ENCODE measurements at regions of chr9 and their contacts with region 1.

Region 1: DNA sequence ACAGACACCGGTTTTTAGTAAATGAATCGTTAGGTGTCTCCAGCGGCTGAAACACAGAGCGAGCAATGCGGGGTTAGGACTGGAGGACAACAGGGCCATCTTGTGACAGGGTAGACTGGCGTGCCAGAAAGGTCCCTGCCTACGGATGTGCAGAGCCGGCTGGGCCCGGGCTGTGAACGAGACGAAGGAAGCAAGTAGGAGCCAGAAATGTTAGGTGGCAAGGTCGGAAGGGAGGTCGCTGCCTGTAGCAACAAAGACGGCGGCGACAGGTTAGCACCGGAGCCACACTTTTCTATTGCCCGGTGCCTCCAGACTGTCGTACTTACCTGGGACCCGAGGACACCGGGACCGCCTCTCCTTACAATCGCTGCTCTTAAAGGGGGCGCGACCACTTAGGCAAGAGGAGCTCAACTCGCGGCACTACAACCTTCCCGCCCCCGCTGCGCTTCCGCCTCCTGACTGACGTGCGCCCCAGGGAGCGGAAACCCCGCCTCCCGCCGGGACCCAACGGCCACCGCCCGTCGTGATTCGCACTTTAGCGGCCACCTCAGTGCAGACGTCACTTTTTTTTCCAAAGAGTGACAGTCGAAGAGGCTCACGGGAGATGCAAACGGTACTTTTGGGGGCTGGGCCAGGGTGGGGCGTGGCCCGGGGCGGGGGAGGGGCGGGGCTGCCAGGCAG is at the start of gene INIP:
- DNase-seq: peak; percentile 98
- ATAC-seq: peak; percentile 93
- H3K4me3 ChIP-seq: peak within 1 kb of the TSS; percentile 81 to 92 (median 87)
- H3K4me3 Mint-ChIP-seq: peak within 1 kb of the TSS; percentile 97
- H3K27ac ChIP-seq: peak within 1 kb of the TSS; percentile 88 to 95
- H3K27ac Mint-ChIP-seq: peak within 1 kb of the TSS; percentile 98
- H3K4me1 ChIP-seq: peaks cover 6 to 16% of the 10 kb centered on the region in 2 donors
- H3K4me1 Mint-ChIP-seq: peaks cover 17% of the 10 kb centered on the region
- H3K27me3 ChIP-seq: no peaks in the 10 kb centered on the region
- H3K27me3 Mint-ChIP-seq: no peaks in the 10 kb centered on the region
- CTCF ChIP-seq: no peak
- total RNA-seq, gene INIP: 22.9 and 27.8 TPM in 2 replicates

Region 2: DNA sequence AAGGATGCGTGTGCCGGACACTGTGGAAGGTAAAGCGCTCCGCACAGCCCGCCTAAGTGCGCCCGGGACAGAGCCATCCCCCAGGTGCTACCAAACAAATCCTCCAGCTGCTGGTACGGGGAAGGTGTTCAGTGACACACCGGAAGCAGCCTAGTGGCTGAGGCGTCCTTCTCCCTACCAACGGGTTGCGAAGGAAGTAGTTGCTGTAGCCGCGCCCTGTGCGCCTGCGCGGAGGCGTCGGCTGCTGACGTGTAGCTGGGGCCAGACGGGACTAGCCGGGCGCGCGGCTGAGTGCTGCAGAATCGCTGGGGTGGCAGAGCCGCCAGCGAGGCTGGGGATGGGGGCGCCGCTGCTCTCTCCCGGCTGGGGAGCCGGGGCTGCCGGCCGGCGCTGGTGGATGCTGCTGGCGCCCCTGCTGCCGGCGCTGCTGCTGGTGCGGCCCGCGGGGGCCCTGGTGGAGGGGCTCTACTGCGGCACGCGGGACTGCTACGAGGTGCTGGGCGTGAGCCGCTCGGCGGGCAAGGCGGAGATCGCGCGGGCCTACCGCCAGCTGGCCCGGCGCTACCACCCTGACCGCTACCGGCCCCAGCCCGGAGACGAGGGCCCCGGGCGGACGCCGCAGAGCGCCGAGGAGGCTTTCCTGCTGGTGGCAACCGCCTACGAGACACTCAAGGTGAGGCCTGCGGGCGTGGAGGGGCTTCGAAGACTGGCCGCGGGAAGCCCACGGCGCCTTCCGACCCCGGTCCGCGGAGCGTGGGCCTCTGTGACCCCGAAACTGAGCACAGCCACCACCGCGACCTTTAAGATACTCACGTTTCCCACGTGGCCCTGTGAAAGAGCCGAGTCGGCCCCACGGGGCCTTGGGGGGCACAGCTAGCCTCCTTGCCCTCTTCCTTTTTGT is 1086.5 kb before region 1 on chr9 and contains the start of gene DNAJC25:
- CTCF ChIA-PET with region 1: no interaction called
- POLR2A ChIA-PET with region 1: no interaction called
- intact Hi-C with region 1: loop called (anchors 2 kb)
- DNase-seq: peak; percentile 98
- ATAC-seq: peak; percentile 87
- H3K4me3 ChIP-seq: peak within 1 kb of the TSS; percentile 65 to 92 (median 85)
- H3K4me3 Mint-ChIP-seq: peak within 1 kb of the TSS; percentile 98
- H3K27ac ChIP-seq: peak within 1 kb of the TSS; percentile 64 to 84
- H3K27ac Mint-ChIP-seq: peak within 1 kb of the TSS; percentile 93
- H3K4me1 ChIP-seq: peaks cover 15 to 17% of the 10 kb centered on the region in 2 donors
- H3K4me1 Mint-ChIP-seq: peaks cover 39% of the 10 kb centered on the region
- H3K27me3 ChIP-seq: no peaks in the 10 kb centered on the region
- H3K27me3 Mint-ChIP-seq: no peaks in the 10 kb centered on the region
- CTCF ChIP-seq: no peak
- total RNA-seq, gene DNAJC25: 3.8 and 4.1 TPM in 2 replicates

Region 3: GRCh38 chr9:111896353-111896958 is 821.3 kb before region 1 on chr9 and contains the start of gene UGCG:
- CTCF ChIA-PET with region 1: no interaction called
- POLR2A ChIA-PET with region 1: no interaction called
- intact Hi-C with region 1: loop called (anchors 2 kb)
- DNase-seq: peak; percentile 93
- ATAC-seq: peak; percentile 85
- H3K4me3 ChIP-seq: peak within 1 kb of the TSS; percentile 70 to 95 (median 91)
- H3K4me3 Mint-ChIP-seq: peak within 1 kb of the TSS; percentile 94
- H3K27ac ChIP-seq: peak within 1 kb of the TSS; percentile 54 to 84
- H3K27ac Mint-ChIP-seq: peak within 1 kb of the TSS; percentile 91
- H3K4me1 ChIP-seq: peaks cover 42 to 51% of the 10 kb centered on the region in 2 donors
- H3K4me1 Mint-ChIP-seq: peaks cover 12% of the 10 kb centered on the region
- H3K27me3 ChIP-seq: no peaks in the 10 kb centered on the region
- H3K27me3 Mint-ChIP-seq: no peaks in the 10 kb centered on the region
- CTCF ChIP-seq: no peak
- total RNA-seq, gene UGCG: 53.5 and 54.1 TPM in 2 replicates

Region 4: DNA sequence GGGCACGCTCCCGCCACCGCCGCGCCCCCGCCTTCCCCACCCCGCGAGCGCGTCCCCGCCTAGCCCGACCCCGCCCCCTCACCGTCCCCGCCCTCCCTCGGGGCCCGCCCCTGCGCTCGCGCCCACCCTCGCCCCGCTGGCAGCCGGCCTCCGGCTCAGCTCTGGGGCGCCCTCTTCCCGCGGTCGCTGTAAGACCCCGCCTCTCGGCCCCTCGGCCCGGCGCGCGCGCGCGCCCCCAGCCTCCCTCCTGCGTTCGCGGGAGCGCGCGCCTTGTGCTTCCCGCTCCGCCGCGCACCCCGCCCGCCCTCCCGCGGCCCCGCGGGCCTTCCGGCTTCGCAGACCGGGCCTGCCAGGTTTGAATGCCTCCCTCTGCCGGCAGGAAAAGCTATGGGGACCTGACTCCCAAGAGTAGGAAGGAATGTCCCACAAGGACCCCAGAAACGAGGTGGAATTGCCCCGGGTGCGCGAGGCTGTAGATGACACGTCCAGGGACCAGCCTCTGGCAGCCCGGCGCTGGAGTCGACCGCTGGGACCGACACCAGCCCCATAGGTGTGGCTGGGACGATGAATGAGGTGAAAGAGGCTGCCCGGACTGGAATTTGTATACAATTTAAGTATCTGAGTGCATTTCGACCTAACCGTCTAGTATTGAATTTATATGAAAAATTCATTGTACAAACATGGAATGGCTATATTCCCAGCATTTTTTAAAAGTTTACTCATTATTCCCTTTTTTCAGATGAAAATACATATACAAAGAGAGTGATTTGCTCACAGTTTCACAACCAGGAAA is 384.0 kb before region 1 on chr9:
- CTCF ChIA-PET with region 1: interaction called, 5 read pairs
- POLR2A ChIA-PET with region 1: no interaction called
- intact Hi-C with region 1: loop called (anchors 1 kb)
- DNase-seq: peak; percentile 97
- ATAC-seq: peak; percentile 86
- H3K4me3 ChIP-seq: peak overlapping the region; percentile 71 to 93 (median 90)
- H3K4me3 Mint-ChIP-seq: peak overlapping the region; percentile 98
- H3K27ac ChIP-seq: peak overlapping the region; percentile 89 to 97
- H3K27ac Mint-ChIP-seq: peak overlapping the region; percentile 99
- H3K4me1 ChIP-seq: peaks cover 16 to 25% of the 10 kb centered on the region in 2 donors
- H3K4me1 Mint-ChIP-seq: peaks cover 35% of the 10 kb centered on the region
- H3K27me3 ChIP-seq: no peaks in the 10 kb centered on the region
- H3K27me3 Mint-ChIP-seq: no peaks in the 10 kb centered on the region
- CTCF ChIP-seq: peak; percentile 66

Region 5: DNA sequence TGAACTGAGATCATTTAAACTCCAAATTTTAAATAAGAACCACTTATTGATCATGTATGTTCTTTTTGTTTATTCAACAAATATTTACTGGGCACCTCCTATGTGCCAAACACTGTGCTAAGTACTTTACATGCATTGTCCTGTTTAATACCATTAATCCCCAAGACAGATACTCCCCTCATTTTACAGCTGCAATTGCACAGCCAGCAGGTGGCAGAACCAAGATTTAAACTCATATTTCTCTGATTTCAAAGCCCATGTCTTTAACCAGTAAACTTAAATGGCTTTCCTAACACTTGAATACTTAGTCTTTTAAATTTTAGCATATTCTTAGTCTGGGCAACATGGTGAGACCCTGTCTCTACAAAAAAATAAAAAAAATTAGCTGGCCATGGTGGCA is 274.6 kb before region 1 on chr9:
- CTCF ChIA-PET with region 1: interaction called, 10 read pairs
- POLR2A ChIA-PET with region 1: no interaction called
- intact Hi-C with region 1: loop called (anchors 10 kb)
- DNase-seq: peak; percentile 49
- ATAC-seq: no peak
- H3K4me3 ChIP-seq: no peak overlapping the region
- H3K4me3 Mint-ChIP-seq: no peak overlapping the region
- H3K27ac ChIP-seq: no peak overlapping the region
- H3K27ac Mint-ChIP-seq: no peak overlapping the region
- H3K4me1 ChIP-seq: peaks cover 30 to 33% of the 10 kb centered on the region in 2 donors
- H3K4me1 Mint-ChIP-seq: peaks cover 29% of the 10 kb centered on the region
- H3K27me3 ChIP-seq: no peaks in the 10 kb centered on the region
- H3K27me3 Mint-ChIP-seq: no peaks in the 10 kb centered on the region
- CTCF ChIP-seq: peak; percentile 61

Region 6: DNA sequence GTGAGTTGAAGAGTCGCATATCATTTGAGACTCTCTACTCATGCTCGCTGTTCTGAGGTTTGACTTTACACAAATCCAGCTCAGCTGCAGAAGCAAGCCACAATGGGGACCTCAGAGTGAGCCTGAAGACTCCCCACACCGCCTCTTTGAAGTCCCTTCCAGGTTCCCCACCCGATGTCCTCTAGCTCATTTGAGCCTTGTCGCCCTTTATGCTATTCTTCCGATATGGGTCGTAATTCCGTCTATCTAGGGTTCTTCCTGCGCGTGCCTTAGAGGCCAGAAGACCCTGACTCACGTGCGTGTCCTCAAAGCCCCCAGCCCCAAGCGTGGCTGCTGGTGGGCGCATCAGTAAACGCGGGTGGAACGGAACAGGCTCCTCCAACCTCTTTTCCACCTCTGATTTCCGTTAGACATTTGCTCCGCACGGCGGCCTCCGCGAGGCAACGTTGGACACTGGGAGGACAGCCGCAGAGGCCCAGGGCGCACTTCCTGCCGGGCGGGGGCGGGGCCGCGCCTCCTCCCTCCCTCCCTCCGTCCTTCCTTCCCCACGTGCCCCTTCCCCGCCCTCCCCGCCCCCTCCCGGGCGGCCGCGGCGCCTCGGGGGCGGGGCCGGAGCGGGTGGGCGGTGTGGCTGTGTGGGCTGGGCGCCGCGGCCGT is 32.4 kb after region 1 on chr9 and contains the start of gene SNX30:
- CTCF ChIA-PET with region 1: interaction called, 6 read pairs
- POLR2A ChIA-PET with region 1: interaction called, 10 read pairs
- intact Hi-C with region 1: loop called (anchors 1 kb)
- DNase-seq: peak; percentile 88
- ATAC-seq: peak; percentile 94
- H3K4me3 ChIP-seq: peak within 1 kb of the TSS; percentile 67 to 90 (median 83)
- H3K4me3 Mint-ChIP-seq: peak within 1 kb of the TSS; percentile 91
- H3K27ac ChIP-seq: peak within 1 kb of the TSS; percentile 55 to 69
- H3K27ac Mint-ChIP-seq: peak within 1 kb of the TSS; percentile 92
- H3K4me1 ChIP-seq: peaks cover 24 to 44% of the 10 kb centered on the region in 2 donors
- H3K4me1 Mint-ChIP-seq: peaks cover 45% of the 10 kb centered on the region
- H3K27me3 ChIP-seq: no peaks in the 10 kb centered on the region
- H3K27me3 Mint-ChIP-seq: no peaks in the 10 kb centered on the region
- CTCF ChIP-seq: no peak
- total RNA-seq, gene SNX30: 18.8 and 20.6 TPM in 2 replicates

Region 7: DNA sequence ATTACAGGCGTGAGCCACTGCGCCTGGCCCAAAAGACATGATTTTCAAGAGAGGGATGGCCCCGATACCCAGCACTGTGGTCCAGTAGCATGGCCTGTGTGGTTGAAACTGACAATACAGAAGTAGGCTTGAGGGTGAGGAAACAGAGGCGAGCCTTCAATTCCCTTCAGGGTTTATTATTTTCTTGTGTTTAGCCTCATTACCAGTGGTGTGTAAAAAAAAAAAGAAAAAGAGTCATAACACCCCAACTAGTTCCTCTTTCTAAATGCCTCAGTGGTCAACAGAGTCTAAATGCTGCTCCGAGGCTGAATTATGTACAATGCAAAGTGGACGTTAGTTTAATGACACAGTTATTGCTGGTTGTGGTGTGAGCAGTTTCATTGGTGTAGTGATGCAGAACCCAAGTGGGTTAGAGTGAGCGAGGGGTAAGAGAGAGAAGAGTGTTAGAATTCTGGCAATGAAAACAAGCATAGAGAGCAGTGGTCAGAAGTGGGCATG is 91.6 kb after region 1 on chr9:
- CTCF ChIA-PET with region 1: no interaction called
- POLR2A ChIA-PET with region 1: no interaction called
- intact Hi-C with region 1: loop called (anchors 1 kb)
- DNase-seq: peak; percentile 74
- ATAC-seq: peak; percentile 90
- H3K4me3 ChIP-seq: peak overlapping the region in 3 of 5 experiments; percentile 10 to 45 (median 15)
- H3K4me3 Mint-ChIP-seq: no peak overlapping the region
- H3K27ac ChIP-seq: no peak overlapping the region
- H3K27ac Mint-ChIP-seq: no peak overlapping the region
- H3K4me1 ChIP-seq: peaks cover 39% of the 10 kb centered on the region in 2 donors
- H3K4me1 Mint-ChIP-seq: peaks cover 19% of the 10 kb centered on the region
- H3K27me3 ChIP-seq: peaks cover 0 to 9% (median 8%) of the 10 kb centered on the region in 4 experiments
- H3K27me3 Mint-ChIP-seq: peaks cover 20% of the 10 kb centered on the region
- CTCF ChIP-seq: no peak

Region 8: DNA sequence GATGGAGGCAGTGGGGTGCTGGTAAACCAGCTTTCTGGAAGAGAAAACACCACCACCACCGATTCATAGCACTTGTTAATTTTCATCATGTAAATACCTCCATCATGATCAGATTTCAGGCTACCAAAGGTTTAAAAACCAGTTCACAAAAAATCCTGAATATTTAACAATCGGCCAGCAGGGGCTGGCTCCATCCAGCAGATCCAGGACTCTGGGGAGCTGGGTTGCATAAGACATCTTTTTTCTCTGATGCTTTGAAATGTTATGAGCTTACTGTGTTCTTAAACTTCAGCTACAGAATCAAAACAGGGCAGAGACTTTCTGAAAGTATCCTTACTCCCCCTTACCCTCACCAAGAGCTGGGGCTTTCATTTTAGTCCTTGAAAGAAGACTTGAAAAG is 600.0 kb after region 1 on chr9:
- CTCF ChIA-PET with region 1: no interaction called
- POLR2A ChIA-PET with region 1: no interaction called
- intact Hi-C with region 1: no loop called
- DNase-seq: no peak
- ATAC-seq: no peak
- H3K4me3 ChIP-seq: no peak overlapping the region
- H3K4me3 Mint-ChIP-seq: no peak overlapping the region
- H3K27ac ChIP-seq: no peak overlapping the region
- H3K27ac Mint-ChIP-seq: no peak overlapping the region
- H3K4me1 ChIP-seq: no peaks in the 10 kb centered on the region
- H3K4me1 Mint-ChIP-seq: no peaks in the 10 kb centered on the region
- H3K27me3 ChIP-seq: no peaks in the 10 kb centered on the region
- H3K27me3 Mint-ChIP-seq: peaks cover 9% of the 10 kb centered on the region
- CTCF ChIP-seq: no peak